Gastrocnemius medialis (tissue), 4 donors: ENCODE measurements at regions of chr4 and their contacts with region 1.

Region 1: DNA sequence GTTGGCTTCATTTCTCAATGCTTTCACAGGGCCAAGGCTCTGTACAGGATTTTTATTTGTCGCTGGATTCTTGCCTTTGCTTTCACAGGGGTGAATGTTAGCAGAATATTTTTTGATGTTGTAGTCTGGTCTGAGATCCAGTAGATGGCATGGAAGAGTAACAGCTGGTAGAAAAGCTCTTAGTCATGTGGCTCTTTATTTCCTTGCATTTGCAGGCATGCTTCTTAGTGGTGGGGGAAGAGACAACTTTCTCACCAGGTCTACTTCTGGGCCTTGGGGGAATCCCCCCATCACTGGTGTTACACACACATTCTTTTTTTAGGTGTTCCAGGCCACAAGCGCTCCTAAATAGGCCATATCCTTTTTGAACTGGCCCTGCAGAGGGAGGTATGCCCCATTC is 58.2 kb upstream of the DKK2 start:
- DNase-seq: no peak
- ATAC-seq: peak in 1 of 2 donors; percentile 52
- H3K4me3 ChIP-seq: no peak overlapping the region
- H3K27ac ChIP-seq: no peak overlapping the region
- H3K4me1 ChIP-seq: peaks cover 10 to 14% of the 10 kb centered on the region in 2 donors
- H3K27me3 ChIP-seq: no peaks in the 10 kb centered on the region
- CTCF ChIP-seq: peak in 3 of 5 experiments; percentile 18 to 40 (median 24)
- POLR2A ChIP-seq: no peak

Region 2: DNA sequence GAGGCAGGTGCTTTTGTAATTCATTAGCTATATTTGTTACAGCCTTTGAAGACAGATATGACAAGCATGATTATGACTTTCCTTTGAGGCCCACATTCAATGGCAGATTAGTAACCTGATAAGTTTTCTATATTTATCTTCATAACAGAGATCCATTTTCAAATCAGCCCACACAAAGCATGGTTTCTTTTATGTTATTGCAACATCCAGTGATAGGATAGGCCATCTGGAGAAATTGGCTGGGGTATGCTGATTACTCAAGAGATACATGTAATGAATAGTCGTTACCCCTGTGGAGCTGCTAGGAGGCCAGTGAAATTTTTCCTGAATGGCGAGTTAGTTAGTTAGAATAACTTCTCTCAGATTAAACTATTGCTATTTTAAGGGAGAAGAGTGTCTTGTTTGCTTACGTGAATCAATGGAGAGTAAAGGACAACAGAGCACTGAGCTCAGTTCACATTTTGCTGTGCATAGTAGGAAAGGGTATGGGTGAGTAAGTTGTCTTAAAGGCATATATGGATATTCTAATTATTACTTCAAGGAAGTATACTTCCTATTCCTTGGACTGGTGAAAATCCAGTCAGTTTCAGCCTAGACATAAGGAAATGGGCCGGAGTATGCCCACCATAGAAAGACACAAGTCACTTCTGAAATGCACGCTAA is 21.0 kb after region 1 on chr4:
- in situ Hi-C with region 1: no loop called
- intact Hi-C with region 1: loop called (anchors 1 kb)
- DNase-seq: peak in 1 of 2 donors; percentile 16
- ATAC-seq: peak; percentile 97 to 98
- H3K4me3 ChIP-seq: no peak overlapping the region
- H3K27ac ChIP-seq: peak overlapping the region; percentile 39 to 76 (median 48)
- H3K4me1 ChIP-seq: peaks cover 4 to 18% of the 10 kb centered on the region in 2 donors
- H3K27me3 ChIP-seq: no peaks in the 10 kb centered on the region
- CTCF ChIP-seq: no peak
- POLR2A ChIP-seq: no peak

Region 3: GRCh38 chr4:107647591-107647990 is 553.3 kb after region 1 on chr4:
- in situ Hi-C with region 1: no loop called
- intact Hi-C with region 1: no loop called
- DNase-seq: no peak
- ATAC-seq: no peak
- H3K4me3 ChIP-seq: no peak overlapping the region
- H3K27ac ChIP-seq: no peak overlapping the region
- H3K4me1 ChIP-seq: no peaks in the 10 kb centered on the region
- H3K27me3 ChIP-seq: no peaks in the 10 kb centered on the region
- CTCF ChIP-seq: no peak
- POLR2A ChIP-seq: no peak